Activated CD8-positive, alpha-beta T cell treated with anti-CD3 and anti-CD28 coated beads, Interleukin-2, amount 10 ng/mL, durations not matched to agents 7 days and 5 days (primary cell): ENCODE measurements at regions of chr17 and their contacts with region 1.

Region 1: DNA sequence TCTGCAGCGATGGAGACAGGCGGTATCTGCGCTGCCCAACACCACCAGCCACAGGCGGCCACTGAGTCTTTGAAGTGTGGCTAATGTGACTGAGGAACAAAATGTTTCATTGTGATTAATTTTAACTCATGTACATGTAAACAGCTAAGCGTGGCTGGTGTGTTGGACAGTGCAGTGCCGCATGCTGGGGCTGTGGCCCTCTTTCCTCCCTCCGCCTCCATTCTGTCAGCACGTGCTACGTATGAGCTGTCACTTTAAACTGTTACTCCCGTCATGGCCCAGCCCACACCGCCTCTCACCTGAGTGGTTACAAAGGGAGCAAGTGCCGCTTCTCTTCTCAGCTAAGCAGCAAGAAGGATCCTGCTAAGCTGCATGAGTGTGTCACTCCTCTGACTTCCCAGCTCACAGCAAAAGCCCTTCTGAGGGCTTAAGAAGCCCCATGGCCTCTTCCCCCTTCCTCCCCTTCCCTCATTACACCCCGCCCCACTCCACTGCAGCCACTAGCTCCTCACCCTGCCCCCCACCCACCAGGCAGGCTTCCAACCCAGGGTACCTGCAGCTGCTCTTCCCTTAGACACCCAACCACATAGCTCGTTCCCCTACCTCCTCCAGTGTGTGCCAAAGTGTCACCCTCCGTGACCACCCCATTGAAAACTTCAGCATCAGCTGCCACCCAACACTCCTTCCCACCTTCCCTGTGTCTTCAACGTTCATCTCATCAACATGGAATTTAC is 15.0 kb downstream of the HASPIN start:
- DNase-seq: peak; percentile 73
- ATAC-seq: peak; percentile 71
- H3K4me3 Mint-ChIP-seq: no peak overlapping the region
- H3K27ac Mint-ChIP-seq: peak overlapping the region; percentile 69
- H3K4me1 Mint-ChIP-seq: peaks cover 50% of the 10 kb centered on the region
- H3K27me3 Mint-ChIP-seq: peaks cover 4% of the 10 kb centered on the region

Region 2: DNA sequence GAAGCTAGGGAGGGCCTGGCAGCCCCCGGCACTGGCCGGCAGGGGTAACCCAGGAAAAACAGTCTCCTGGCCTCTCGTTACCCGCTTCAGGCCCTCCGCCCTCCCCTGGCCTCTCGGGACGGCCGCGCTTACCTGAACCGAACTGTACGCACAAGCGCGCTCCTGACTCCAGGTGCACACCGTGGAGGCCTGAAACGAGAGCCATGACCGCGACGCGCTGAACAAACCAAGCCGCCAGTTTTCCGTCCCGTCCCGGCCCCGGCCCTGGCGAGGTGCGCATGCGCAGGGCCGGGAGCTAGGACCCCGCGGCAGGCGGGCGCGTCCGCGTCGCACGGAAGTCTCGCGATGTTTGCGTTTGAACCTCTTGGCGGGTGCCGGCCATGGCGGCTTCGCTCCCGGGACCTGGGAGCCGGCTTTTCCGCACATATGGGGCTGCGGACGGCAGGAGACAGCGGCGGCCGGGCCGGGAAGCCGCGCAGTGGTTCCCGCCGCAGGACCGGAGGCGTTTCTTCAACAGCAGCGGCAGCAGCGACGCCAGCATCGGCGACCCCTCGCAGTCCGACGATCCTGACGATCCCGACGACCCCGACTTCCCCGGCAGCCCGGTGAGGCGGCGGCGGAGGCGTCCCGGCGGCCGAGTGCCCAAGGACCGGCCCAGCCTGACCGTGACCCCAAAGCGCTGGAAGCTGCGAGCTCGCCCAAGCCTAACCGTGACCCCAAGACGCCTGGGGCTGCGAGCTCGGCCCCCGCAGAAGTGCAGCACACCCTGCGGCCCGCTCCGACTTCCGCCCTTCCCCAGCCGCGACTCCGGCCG is 15.0 kb before region 1 on chr17 and contains the start of gene HASPIN:
- CTCF ChIA-PET with region 1: interaction called, 45 read pairs
- POLR2A ChIA-PET with region 1: interaction called, 5 read pairs
- DNase-seq: peak; percentile 94
- ATAC-seq: peak; percentile 94
- H3K4me3 Mint-ChIP-seq: peak within 1 kb of the TSS; percentile 92
- H3K27ac Mint-ChIP-seq: peak within 1 kb of the TSS; percentile 90
- H3K4me1 Mint-ChIP-seq: peaks cover 63% of the 10 kb centered on the region
- H3K27me3 Mint-ChIP-seq: no peaks in the 10 kb centered on the region
- total RNA-seq, gene HASPIN: 27.0 to 28.1 TPM

Region 3: GRCh38 chr17:3773511-3773910 is 34.8 kb after region 1 on chr17:
- CTCF ChIA-PET with region 1: interaction called, 15 read pairs
- POLR2A ChIA-PET with region 1: interaction called, 7 read pairs
- DNase-seq: no peak
- ATAC-seq: no peak
- H3K4me3 Mint-ChIP-seq: no peak overlapping the region
- H3K27ac Mint-ChIP-seq: no peak overlapping the region
- H3K4me1 Mint-ChIP-seq: peaks cover 42% of the 10 kb centered on the region
- H3K27me3 Mint-ChIP-seq: peaks cover 6% of the 10 kb centered on the region

Region 4: DNA sequence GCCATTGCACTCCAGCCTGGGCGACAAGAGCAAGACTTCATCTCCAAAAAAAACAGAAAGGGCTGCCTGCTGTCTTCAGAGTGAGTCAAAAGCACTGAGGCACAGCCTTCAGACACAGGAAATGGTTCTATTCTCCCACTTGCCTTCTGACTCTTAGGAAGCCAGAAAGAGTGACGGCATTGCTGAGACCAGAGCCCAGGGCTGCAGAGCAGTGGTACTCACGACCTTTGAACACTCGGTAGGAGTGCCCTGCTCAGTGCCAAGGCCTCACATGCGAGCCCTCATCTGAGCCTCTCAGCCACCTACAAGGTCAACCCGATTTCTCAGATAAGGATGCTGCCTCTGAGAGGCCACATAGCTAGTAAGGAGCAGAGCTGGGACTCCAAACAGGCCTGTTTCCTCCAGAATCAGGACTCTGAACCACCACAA is 65.8 kb after region 1 on chr17:
- CTCF ChIA-PET with region 1: interaction called, 25 read pairs
- POLR2A ChIA-PET with region 1: no interaction called
- DNase-seq: no peak
- ATAC-seq: peak; percentile 62
- H3K4me3 Mint-ChIP-seq: no peak overlapping the region
- H3K27ac Mint-ChIP-seq: no peak overlapping the region
- H3K4me1 Mint-ChIP-seq: peaks cover 49% of the 10 kb centered on the region
- H3K27me3 Mint-ChIP-seq: no peaks in the 10 kb centered on the region

Region 5: DNA sequence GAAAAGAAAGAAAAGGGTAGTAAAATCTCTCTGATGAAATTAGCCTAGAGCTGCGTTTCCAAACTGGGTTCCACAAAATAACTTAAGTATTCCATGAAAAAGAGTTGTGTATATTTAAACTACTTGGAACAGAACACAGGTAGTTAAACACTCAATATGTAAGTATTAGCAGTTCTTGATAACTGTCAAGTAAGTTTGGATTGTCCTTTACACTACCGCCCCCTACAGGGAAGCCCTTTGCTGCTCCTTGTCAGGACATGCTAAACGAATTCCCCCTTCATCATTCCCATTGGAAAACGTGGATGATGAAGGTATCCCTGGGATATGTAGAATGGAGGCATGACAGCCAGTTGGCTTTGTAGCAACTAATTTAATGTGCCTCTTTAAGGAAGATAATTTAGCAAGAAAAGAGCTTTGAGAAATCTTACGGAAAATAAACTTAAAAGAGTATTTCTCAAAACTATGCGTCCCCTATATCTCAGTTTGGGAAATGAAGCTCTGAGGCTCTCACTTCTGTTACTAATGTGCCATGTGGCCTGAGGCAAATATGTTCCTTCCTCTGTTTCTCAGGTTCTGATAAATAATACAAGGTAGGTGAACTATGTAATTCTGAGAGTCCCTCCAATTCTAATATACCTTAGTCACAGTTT is 88.5 kb after region 1 on chr17:
- CTCF ChIA-PET with region 1: interaction called, 456 read pairs
- POLR2A ChIA-PET with region 1: interaction called, 13 read pairs
- DNase-seq: peak; percentile 83
- ATAC-seq: no peak
- H3K4me3 Mint-ChIP-seq: no peak overlapping the region
- H3K27ac Mint-ChIP-seq: no peak overlapping the region
- H3K4me1 Mint-ChIP-seq: peaks cover 9% of the 10 kb centered on the region
- H3K27me3 Mint-ChIP-seq: no peaks in the 10 kb centered on the region

Region 6: GRCh38 chr17:3865176-3865575 is 126.4 kb after region 1 on chr17:
- CTCF ChIA-PET with region 1: interaction called, 13 read pairs
- POLR2A ChIA-PET with region 1: no interaction called
- DNase-seq: no peak
- ATAC-seq: no peak
- H3K4me3 Mint-ChIP-seq: no peak overlapping the region
- H3K27ac Mint-ChIP-seq: no peak overlapping the region
- H3K4me1 Mint-ChIP-seq: no peaks in the 10 kb centered on the region
- H3K27me3 Mint-ChIP-seq: no peaks in the 10 kb centered on the region